Endothelial cell of umbilical vein (primary cell): ENCODE measurements at regions of chr6 and their contacts with region 1.

Region 1: GRCh38 chr6:142331075-142331551 is 29.3 kb downstream of the ADGRG6 start:
- DNase-seq: peak; percentile 81
- H3K4me3 ChIP-seq: peak overlapping the region in 1 of 3 experiments; percentile 23
- H3K27ac ChIP-seq: peak overlapping the region; percentile 96
- H3K4me1 ChIP-seq: peaks cover 68% of the 10 kb centered on the region
- H3K27me3 ChIP-seq: no peaks in the 10 kb centered on the region
- CTCF ChIP-seq: no peak
- POLR2A ChIP-seq: no peak

Region 2: GRCh38 chr6:142294679-142295078 is 36.4 kb before region 1 on chr6:
- CTCF ChIA-PET with region 1: no interaction called
- POLR2A ChIA-PET with region 1: no interaction called
- dilution Hi-C with region 1: no loop called
- intact Hi-C with region 1: no loop called
- DNase-seq: no peak
- H3K4me3 ChIP-seq: no peak overlapping the region
- H3K27ac ChIP-seq: no peak overlapping the region
- H3K4me1 ChIP-seq: peaks cover 13% of the 10 kb centered on the region
- H3K27me3 ChIP-seq: no peaks in the 10 kb centered on the region
- CTCF ChIP-seq: no peak
- POLR2A ChIP-seq: no peak

Region 3: GRCh38 chr6:142313284-142313683 is 17.8 kb before region 1 on chr6:
- CTCF ChIA-PET with region 1: interaction called, 7 read pairs
- POLR2A ChIA-PET with region 1: no interaction called
- dilution Hi-C with region 1: no loop called
- intact Hi-C with region 1: loop called (anchors 2 kb)
- DNase-seq: peak; percentile 77
- H3K4me3 ChIP-seq: no peak overlapping the region
- H3K27ac ChIP-seq: no peak overlapping the region
- H3K4me1 ChIP-seq: peaks cover 25% of the 10 kb centered on the region
- H3K27me3 ChIP-seq: no peaks in the 10 kb centered on the region
- CTCF ChIP-seq: no peak
- POLR2A ChIP-seq: no peak

Region 4: GRCh38 chr6:142320366-142320765 is 10.7 kb before region 1 on chr6:
- CTCF ChIA-PET with region 1: interaction called, 6 read pairs
- POLR2A ChIA-PET with region 1: interaction called, 3 read pairs
- dilution Hi-C with region 1: no loop called
- intact Hi-C with region 1: loop called (anchors 1 kb)
- DNase-seq: no peak
- H3K4me3 ChIP-seq: no peak overlapping the region
- H3K27ac ChIP-seq: no peak overlapping the region
- H3K4me1 ChIP-seq: no peaks in the 10 kb centered on the region
- H3K27me3 ChIP-seq: no peaks in the 10 kb centered on the region
- CTCF ChIP-seq: no peak
- POLR2A ChIP-seq: no peak

Region 5: GRCh38 chr6:142387997-142388815 is 57.1 kb after region 1 on chr6:
- CTCF ChIA-PET with region 1: interaction called, 16 read pairs
- POLR2A ChIA-PET with region 1: no interaction called
- dilution Hi-C with region 1: no loop called
- intact Hi-C with region 1: no loop called
- DNase-seq: peak; percentile 81
- H3K4me3 ChIP-seq: no peak overlapping the region
- H3K27ac ChIP-seq: peak overlapping the region; percentile 11
- H3K4me1 ChIP-seq: peaks cover 7% of the 10 kb centered on the region
- H3K27me3 ChIP-seq: no peaks in the 10 kb centered on the region
- CTCF ChIP-seq: peak; percentile 47 to 50
- POLR2A ChIP-seq: no peak